K562 (cell line): ENCODE measurements at regions of chr21 and their contacts with region 1.

Region 1: DNA sequence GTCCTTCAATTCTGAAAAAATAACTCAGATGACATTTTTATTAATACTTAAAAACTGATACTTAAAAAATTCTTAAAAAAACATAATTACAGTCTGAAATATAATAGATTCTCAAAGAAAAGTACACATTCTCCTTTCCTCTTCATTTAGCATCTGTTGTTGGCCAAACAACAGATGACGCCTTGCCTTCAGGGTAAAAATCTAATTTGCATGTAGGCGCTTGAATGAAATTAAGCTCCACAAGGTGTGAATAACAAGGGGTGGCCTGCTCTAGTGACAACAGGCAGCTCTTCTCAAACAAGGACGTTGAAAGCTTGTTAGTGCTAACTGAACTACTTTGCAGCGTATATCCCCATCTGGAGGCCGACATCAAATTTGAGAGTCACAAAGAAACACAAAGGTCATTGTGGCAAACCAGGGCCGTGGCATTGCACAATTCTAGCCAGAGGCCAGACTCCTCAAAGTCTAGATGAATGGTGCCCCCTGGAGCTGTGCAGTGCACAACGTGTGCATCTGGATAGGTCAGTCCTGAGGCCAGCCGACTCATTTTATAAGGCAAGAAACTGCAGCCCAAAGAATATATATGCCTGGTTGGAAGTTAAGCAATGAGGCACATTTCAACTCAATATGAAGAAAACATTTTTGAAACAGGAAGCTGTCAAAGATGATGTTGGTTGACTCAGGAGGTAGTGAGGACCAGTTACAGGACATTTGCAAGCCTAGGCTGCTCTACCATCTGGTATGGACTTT is 459.2 kb upstream of the RUNX1 start:
- DNase-seq: peak; percentile 35 to 84 (median 51)
- ATAC-seq: peak; percentile 96
- H3K4me3 ChIP-seq: no peak overlapping the region
- H3K27ac ChIP-seq: no peak overlapping the region
- H3K4me1 ChIP-seq: peaks cover 3 to 43% of the 10 kb centered on the region in 2 experiments; a peak in 4 of 5 replicates
- H3K27me3 ChIP-seq: no peaks in the 10 kb centered on the region; a peak in 1 of 5 replicates
- CTCF ChIP-seq: peak; percentile 76 to 86 (median 81)
- EP300 ChIP-seq: peak; percentile 58
- POLR2A ChIP-seq: no peak
- RAD21 ChIP-seq: peak; percentile 97

Region 2: DNA sequence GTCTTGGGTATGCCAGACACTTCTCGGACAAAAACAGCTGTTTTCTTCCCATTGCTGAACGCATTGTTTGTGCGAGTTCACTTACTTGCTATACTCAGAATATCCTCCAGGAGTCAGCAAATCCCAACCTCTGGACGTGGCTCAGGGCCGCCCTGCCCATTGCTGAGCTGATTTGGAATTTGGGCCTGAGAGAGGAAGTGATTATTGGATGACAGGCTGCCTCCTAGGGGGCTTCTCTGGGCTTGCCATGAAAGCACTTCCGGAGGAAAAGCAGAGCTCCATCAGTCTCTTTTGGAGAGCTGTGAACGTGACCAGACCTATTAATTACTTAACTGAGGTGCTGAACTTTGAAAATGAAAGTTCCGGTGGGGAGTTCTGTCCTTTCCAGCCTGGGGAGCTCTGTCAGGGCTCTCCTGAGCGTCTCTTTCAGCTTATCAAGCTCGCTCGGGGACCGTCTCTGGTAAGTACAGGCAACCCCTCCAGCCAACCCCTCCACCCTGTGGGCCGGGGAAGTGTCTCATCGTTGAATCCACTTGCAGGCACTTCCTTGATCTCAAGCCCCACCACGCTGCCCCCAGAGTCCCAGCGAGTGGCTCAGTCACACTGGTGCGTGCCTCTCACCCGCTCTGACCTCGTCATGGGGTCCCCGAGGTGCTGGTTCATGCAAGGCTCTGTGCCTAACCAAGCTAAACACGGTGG is 762.6 kb before region 1 on chr21:
- CTCF ChIA-PET with region 1: interaction called, 8 read pairs
- POLR2A ChIA-PET with region 1: no interaction called
- in situ Hi-C with region 1: no loop called
- intact Hi-C with region 1: loop called (anchors 2 kb)
- DNase-seq: peak; percentile 78 to 89 (median 86)
- ATAC-seq: peak; percentile 99
- H3K4me3 ChIP-seq: no peak overlapping the region
- H3K27ac ChIP-seq: no peak overlapping the region
- H3K4me1 ChIP-seq: peaks cover 4 to 6% of the 10 kb centered on the region in 2 experiments; a peak in 3 of 5 replicates
- H3K27me3 ChIP-seq: peaks cover 9 to 36% of the 10 kb centered on the region in 2 experiments
- CTCF ChIP-seq: peak; percentile 98 to 99 (median 98)
- EP300 ChIP-seq: peak; percentile 46
- POLR2A ChIP-seq: no peak
- RAD21 ChIP-seq: peak; percentile 99

Region 3: DNA sequence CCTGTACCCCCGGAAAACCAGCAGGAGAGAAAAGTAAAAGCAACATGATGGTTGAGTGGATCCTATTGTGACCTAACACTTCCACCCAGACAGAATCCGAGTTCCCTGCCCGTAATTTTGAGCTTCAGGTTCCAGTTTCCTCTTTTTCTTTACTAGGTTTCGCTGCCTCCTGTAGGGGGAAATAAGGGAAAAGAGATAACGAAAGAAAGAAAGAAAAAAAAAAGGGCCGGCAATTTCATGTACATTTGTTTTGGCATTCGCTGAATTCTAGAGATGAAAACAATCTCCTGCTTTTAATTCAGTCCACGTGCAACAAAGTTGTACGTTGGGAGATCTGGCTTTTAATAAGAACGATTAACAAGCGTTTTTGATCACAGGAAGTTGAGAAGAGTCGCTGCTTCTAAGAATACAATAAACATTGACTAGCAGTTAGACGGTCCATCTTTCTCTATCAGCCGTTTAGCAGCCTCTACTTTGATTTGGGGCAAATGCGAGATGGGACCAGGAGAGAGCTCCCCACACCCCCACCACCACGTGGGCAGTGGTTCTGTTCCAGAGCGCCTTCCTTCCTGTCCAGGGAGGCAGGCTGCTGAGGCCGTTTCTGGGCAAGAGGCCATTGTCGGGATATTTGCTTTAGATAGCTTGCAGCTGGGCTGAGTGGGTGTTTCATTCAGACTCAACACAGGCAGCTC is 303.3 kb before region 1 on chr21:
- CTCF ChIA-PET with region 1: no interaction called
- POLR2A ChIA-PET with region 1: interaction called, 3 read pairs
- in situ Hi-C with region 1: no loop called
- intact Hi-C with region 1: loop called (anchors 10 kb)
- DNase-seq: peak; percentile 69 to 85 (median 73)
- ATAC-seq: peak; percentile 75
- H3K4me3 ChIP-seq: peak overlapping the region; percentile 18
- H3K27ac ChIP-seq: peak overlapping the region; percentile 85
- H3K4me1 ChIP-seq: peaks cover 24 to 48% of the 10 kb centered on the region in 2 experiments
- H3K27me3 ChIP-seq: no peaks in the 10 kb centered on the region
- CTCF ChIP-seq: peak; percentile 26 to 52 (median 42); a peak in 4 of 6 replicates
- EP300 ChIP-seq: no peak; the same call in 1 of the 2 replicates
- POLR2A ChIP-seq: no peak; the same call in 1 of the 2 replicates
- RAD21 ChIP-seq: peak; percentile 56 to 62

Region 4: GRCh38 chr21:35400233-35400957 is 107.9 kb before region 1 on chr21:
- CTCF ChIA-PET with region 1: no interaction called
- POLR2A ChIA-PET with region 1: no interaction called
- in situ Hi-C with region 1: no loop called
- intact Hi-C with region 1: loop called (anchors 1 kb)
- DNase-seq: peak; percentile 18 to 79 (median 38)
- ATAC-seq: peak; percentile 92
- H3K4me3 ChIP-seq: no peak overlapping the region
- H3K27ac ChIP-seq: no peak overlapping the region
- H3K4me1 ChIP-seq: peaks cover 0 to 15% of the 10 kb centered on the region in 2 experiments; a peak in 3 of 5 replicates
- H3K27me3 ChIP-seq: no peaks in the 10 kb centered on the region; a peak in 2 of 5 replicates
- CTCF ChIP-seq: peak; percentile 53 to 82 (median 70)
- EP300 ChIP-seq: peak; percentile 48; the same call in 1 of the 2 replicates
- POLR2A ChIP-seq: no peak
- RAD21 ChIP-seq: peak; percentile 97 to 98

Region 5: DNA sequence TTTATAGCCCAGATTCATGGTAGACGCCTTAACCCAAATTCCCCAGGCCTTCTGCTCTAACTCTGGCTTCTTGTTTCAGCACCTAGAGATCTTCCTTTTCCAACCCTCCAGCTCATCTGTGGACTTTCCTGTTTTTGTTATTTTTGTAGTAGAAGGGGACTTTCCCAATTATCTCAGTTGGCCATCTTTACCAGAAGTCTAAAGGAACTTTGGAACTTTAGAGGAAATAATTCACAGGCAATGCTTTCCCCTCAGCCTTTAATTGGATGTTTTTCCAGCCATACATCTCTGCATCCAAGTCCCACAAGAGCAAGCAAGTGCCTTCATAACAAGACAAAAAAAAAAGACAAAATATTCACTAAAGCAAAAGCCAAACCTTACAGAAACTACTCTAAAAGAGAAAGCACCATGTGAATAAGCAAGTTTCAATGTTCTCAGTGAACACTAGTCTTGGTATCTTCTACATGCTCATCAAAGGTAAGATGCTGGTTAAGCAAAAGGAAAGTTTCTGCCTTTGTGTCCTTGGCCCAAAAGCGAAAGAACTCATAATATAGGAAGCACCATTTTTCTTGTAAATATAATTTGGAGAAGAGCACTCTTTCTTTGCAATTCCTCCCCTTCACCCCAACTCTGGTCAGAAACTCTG is 174.7 kb after region 1 on chr21:
- CTCF ChIA-PET with region 1: no interaction called
- POLR2A ChIA-PET with region 1: no interaction called
- in situ Hi-C with region 1: no loop called
- intact Hi-C with region 1: no loop called
- DNase-seq: no peak
- ATAC-seq: no peak
- H3K4me3 ChIP-seq: no peak overlapping the region
- H3K27ac ChIP-seq: no peak overlapping the region
- H3K4me1 ChIP-seq: no peaks in the 10 kb centered on the region
- H3K27me3 ChIP-seq: peaks cover 0 to 8% of the 10 kb centered on the region in 2 experiments; a peak in 3 of 5 replicates
- CTCF ChIP-seq: no peak
- EP300 ChIP-seq: no peak
- POLR2A ChIP-seq: no peak
- RAD21 ChIP-seq: no peak

Region 6: DNA sequence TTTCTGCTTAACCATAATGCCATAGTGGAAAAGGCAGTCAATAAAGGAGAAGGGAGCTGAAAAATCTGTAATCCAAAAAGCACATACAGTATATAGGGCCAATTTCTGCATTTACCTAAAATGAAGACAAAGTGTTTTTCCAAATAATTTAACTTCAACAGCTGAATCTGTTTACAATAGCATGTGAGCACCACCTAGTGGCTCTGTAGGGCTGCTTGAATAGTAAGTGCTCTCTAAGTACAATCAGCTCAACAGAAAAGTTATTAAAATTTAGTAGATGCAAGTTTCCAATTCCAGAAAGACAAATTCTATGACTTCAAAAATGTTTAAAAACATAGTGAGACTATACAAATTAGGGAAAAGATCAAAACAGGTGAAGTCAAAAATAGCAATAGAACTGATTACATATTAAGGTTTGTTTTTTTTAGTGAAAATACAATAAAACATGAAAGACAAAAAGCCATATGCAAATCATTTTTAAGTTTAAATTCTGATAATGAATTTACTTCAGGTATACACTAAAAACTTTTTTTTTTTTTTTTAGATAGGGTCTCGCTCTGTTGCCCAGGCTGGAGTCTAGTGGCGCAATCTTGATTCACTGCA is 332.0 kb after region 1 on chr21:
- CTCF ChIA-PET with region 1: no interaction called
- POLR2A ChIA-PET with region 1: no interaction called
- in situ Hi-C with region 1: no loop called
- intact Hi-C with region 1: loop called (anchors 10 kb)
- DNase-seq: peak; percentile 43 to 78 (median 54)
- ATAC-seq: peak; percentile 82
- H3K4me3 ChIP-seq: no peak overlapping the region
- H3K27ac ChIP-seq: no peak overlapping the region
- H3K4me1 ChIP-seq: no peaks in the 10 kb centered on the region
- H3K27me3 ChIP-seq: peaks cover 0 to 11% of the 10 kb centered on the region in 2 experiments; a peak in 3 of 5 replicates
- CTCF ChIP-seq: peak; percentile 70 to 87 (median 75); a peak in 5 of 6 replicates
- EP300 ChIP-seq: no peak
- POLR2A ChIP-seq: no peak
- RAD21 ChIP-seq: peak; percentile 82 to 96